Calu3 (cell line): ENCODE measurements at regions of chr2 and their contacts with region 1.

Region 1: GRCh38 chr2:113370478-113371091 is 66.9 kb upstream of the ZNG1B start:
- DNase-seq: peak; percentile 83
- H3K4me3 Mint-ChIP-seq: no peak overlapping the region
- H3K27ac Mint-ChIP-seq: peak overlapping the region; percentile 50
- H3K4me1 Mint-ChIP-seq: peaks cover 25% of the 10 kb centered on the region
- H3K27me3 Mint-ChIP-seq: no peaks in the 10 kb centered on the region
- CTCF ChIP-seq: peak; percentile 58

Region 2: GRCh38 chr2:113240150-113240862 is 130.3 kb before region 1 on chr2:
- CTCF ChIA-PET with region 1: interaction called, 5 read pairs
- intact Hi-C with region 1: loop called (anchors 2 kb)
- DNase-seq: peak; percentile 74
- H3K4me3 Mint-ChIP-seq: peak overlapping the region; percentile 35
- H3K27ac Mint-ChIP-seq: peak overlapping the region; percentile 94
- H3K4me1 Mint-ChIP-seq: peaks cover 48% of the 10 kb centered on the region
- H3K27me3 Mint-ChIP-seq: no peaks in the 10 kb centered on the region
- CTCF ChIP-seq: no peak

Region 3: DNA sequence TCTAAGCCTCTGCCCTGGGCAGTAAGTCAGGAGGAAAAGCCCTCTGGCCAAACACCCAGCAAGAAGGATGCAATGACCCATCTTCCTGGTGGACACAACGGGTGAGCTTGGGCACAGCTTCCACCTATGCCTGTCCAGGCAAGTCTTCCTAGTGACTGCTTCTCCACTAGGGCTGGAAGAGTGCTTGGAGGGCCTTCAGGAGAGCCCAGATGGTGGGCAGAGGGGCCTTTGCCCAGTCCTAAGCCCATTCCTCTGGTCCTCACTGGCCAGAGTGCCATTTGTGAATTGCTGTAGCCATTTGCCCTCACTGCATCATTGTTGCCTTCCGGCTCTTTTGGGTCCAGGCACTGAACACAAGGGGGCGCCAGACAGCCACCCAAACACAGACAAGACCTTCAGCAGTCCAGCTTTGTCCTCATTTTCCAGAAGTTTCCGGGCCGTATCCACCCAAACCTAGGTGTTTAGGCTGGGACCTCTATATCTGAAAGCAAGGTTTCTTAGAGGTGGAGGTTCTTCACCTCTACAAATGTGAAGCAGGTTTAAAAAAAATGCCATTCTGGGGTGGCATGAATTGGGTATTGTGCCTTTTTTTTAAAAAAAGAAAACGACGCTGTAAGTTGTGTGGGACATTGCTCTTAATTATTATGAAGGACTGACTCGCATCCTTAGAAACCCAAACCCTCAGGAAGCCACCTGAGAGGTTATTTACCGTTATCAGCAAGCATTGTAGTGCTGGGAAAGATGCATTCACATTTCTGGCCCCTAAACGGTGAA is 121.4 kb before region 1 on chr2:
- CTCF ChIA-PET with region 1: interaction called, 37 read pairs
- intact Hi-C with region 1: loop called (anchors 1 kb)
- DNase-seq: peak; percentile 84
- H3K4me3 Mint-ChIP-seq: no peak overlapping the region
- H3K27ac Mint-ChIP-seq: peak overlapping the region; percentile 28
- H3K4me1 Mint-ChIP-seq: peaks cover 49% of the 10 kb centered on the region
- H3K27me3 Mint-ChIP-seq: no peaks in the 10 kb centered on the region
- CTCF ChIP-seq: peak; percentile 87

Region 4: DNA sequence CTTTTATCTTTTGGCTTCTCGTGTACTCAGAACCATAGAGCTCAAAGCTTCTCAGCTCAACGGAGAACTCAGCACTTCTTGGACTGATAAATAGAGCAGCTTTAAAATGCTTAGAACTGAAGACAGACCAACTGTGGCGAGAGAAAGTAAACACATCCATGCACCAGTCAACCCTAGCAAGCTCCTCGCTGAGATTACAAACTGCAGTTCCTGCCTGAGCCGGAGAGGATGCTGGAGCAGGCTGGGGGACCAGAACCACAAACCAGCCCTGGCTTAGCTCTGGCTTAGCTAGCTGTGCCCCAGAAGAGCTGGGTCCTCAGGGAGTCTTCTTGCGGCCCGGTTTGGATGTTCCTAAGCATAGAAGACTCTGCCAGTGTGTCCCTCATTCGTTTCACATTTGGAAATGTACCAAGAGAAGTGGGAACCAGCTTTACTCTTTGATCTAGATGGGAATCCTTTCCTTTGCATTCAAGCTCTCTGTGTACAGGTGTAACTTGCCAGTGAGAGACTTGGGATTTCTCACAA is 97.5 kb before region 1 on chr2:
- CTCF ChIA-PET with region 1: interaction called, 10 read pairs
- intact Hi-C with region 1: no loop called
- DNase-seq: peak; percentile 61
- H3K4me3 Mint-ChIP-seq: no peak overlapping the region
- H3K27ac Mint-ChIP-seq: peak overlapping the region; percentile 91
- H3K4me1 Mint-ChIP-seq: peaks cover 17% of the 10 kb centered on the region
- H3K27me3 Mint-ChIP-seq: no peaks in the 10 kb centered on the region
- CTCF ChIP-seq: peak; percentile 29

Region 5: GRCh38 chr2:113282747-113283533 is 87.6 kb before region 1 on chr2:
- CTCF ChIA-PET with region 1: interaction called, 9 read pairs
- intact Hi-C with region 1: loop called (anchors 2 kb)
- DNase-seq: peak; percentile 96
- H3K4me3 Mint-ChIP-seq: peak overlapping the region; percentile 55
- H3K27ac Mint-ChIP-seq: peak overlapping the region; percentile 98
- H3K4me1 Mint-ChIP-seq: peaks cover 87% of the 10 kb centered on the region
- H3K27me3 Mint-ChIP-seq: no peaks in the 10 kb centered on the region
- CTCF ChIP-seq: peak; percentile 54